ENCODE measurements at regions of chr22 and their contacts with region 1.

Region 1: GRCh38 chr22:24521791-24522245 is 26.7 kb downstream of the UPB1 start:
- DNase-seq: no peak
- H3K4me3 ChIP-seq: no peak overlapping the region
- H3K27ac ChIP-seq: no peak overlapping the region
- H3K4me1 ChIP-seq: peaks cover 5 to 33% (median 6%) of the 10 kb centered on the region in 3 donors
- H3K27me3 ChIP-seq: no peaks in the 10 kb centered on the region
- CTCF ChIP-seq: peak in 5 of 6 experiments; percentile 46 to 73 (median 68)
- POLR2A ChIP-seq: no peak

Region 2: GRCh38 chr22:24322522-24322921 is 199.3 kb before region 1 on chr22:
- intact Hi-C with region 1: loop called (anchors 5 kb)
- DNase-seq: no peak
- H3K4me3 ChIP-seq: no peak overlapping the region
- H3K27ac ChIP-seq: no peak overlapping the region
- H3K4me1 ChIP-seq: peaks cover 0 to 5% (median 3%) of the 10 kb centered on the region in 3 donors
- H3K27me3 ChIP-seq: no peaks in the 10 kb centered on the region
- CTCF ChIP-seq: no peak
- POLR2A ChIP-seq: no peak